ENCODE measurements at regions of chr2 and their contacts with region 1.

Region 1: DNA sequence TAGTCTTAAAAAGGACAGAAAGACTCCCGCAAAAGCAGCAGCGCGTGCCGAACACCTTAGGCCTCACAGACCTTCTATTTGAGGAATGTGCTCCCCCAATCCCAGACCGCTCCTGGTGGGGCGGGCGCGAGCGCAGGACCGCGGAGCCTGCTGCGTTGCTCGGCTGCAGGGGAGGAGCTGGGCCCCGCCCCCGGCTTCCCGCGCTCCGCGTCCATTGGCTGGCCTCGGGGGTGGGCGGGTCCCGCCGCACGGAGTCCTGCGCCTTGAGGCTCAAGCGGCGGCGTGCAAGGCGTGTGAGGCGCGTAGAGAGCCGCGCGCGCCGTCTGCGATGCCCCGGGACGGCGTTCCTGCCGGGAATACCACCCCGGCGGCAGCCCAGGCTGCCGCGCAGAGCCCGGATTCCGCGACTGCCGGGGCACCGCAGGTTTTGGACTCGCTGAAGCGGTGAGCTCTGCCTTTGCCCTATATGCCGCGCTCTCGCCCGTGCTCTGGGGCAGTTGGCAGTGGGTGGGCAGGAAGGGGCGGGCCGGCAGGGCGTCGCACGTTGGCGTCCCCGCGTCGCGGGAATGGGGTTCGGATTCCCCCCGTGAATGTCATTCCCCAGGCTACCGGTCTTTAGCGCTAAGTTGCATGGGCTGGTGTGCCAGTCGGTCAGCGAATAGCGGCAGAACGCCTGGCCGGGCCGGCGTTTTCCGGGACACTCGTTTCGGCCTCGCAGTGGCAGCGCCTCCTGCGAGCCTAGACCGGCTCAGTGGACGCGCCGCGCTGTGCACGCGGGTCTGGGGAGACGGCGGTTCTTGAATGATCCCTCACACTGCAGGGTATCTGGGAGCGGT is 49.6 kb upstream of the PAIP2B start:
- DNase-seq: peak; percentile 98
- H3K4me3 Mint-ChIP-seq: peak overlapping the region; percentile 86
- H3K27ac Mint-ChIP-seq: peak overlapping the region; percentile 41
- H3K4me1 Mint-ChIP-seq: peaks cover 20% of the 10 kb centered on the region
- H3K27me3 Mint-ChIP-seq: peaks cover 42% of the 10 kb centered on the region
- CTCF ChIP-seq: no peak

Region 2: GRCh38 chr2:71157124-71157793 is 119.3 kb before region 1 on chr2:
- CTCF ChIA-PET with region 1: no interaction called
- intact Hi-C with region 1: loop called (anchors 10 kb)
- DNase-seq: peak; percentile 70
- H3K4me3 Mint-ChIP-seq: peak overlapping the region; percentile 5
- H3K27ac Mint-ChIP-seq: no peak overlapping the region
- H3K4me1 Mint-ChIP-seq: peaks cover 16% of the 10 kb centered on the region
- H3K27me3 Mint-ChIP-seq: peaks cover 52% of the 10 kb centered on the region
- CTCF ChIP-seq: peak; percentile 80

Region 3: DNA sequence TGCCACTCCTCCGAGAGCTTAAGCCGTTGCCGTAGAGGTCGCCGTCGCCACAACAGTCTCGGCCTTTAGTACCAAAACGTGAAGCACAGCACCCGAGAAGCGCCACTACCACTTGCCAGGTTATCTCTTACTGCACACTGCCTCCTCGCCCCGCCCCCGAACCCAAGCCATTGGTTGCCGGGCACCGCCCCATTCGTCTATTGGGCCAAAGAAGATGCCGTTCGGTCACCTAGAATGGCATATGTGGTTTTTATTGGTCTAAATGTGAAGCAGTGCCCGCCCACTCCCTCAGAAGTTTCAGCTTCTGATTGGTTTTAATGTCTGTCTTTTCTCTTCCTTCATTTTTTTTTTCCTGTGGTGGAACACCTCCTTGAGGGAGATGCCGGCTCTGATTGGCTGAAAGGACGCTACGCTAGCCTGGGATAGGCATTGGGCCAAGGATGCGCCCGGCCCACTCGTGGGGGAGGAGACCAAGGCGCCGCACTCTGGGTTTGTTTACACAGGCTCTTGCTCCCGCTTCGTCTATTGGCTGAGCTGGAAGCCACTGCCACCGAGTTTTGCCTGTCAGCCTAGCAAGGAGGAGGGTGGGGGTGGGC is 49.5 kb before region 1 on chr2 and contains the start of gene PAIP2B:
- CTCF ChIA-PET with region 1: interaction called, 6 read pairs
- intact Hi-C with region 1: loop called (anchors 2 kb)
- DNase-seq: peak; percentile 98
- H3K4me3 Mint-ChIP-seq: peak within 1 kb of the TSS; percentile 94
- H3K27ac Mint-ChIP-seq: peak within 1 kb of the TSS; percentile 91
- H3K4me1 Mint-ChIP-seq: peaks cover 9% of the 10 kb centered on the region
- H3K27me3 Mint-ChIP-seq: peaks cover 39% of the 10 kb centered on the region
- CTCF ChIP-seq: no peak
- total RNA-seq, gene PAIP2B: 3.6 and 4.0 TPM in 2 replicates

Region 4: GRCh38 chr2:71466303-71467173 is 190.0 kb after region 1 on chr2:
- CTCF ChIA-PET with region 1: no interaction called
- intact Hi-C with region 1: no loop called
- DNase-seq: peak; percentile 54
- H3K4me3 Mint-ChIP-seq: no peak overlapping the region
- H3K27ac Mint-ChIP-seq: no peak overlapping the region
- H3K4me1 Mint-ChIP-seq: peaks cover 8% of the 10 kb centered on the region
- H3K27me3 Mint-ChIP-seq: peaks cover 25% of the 10 kb centered on the region
- CTCF ChIP-seq: no peak

Region 5: DNA sequence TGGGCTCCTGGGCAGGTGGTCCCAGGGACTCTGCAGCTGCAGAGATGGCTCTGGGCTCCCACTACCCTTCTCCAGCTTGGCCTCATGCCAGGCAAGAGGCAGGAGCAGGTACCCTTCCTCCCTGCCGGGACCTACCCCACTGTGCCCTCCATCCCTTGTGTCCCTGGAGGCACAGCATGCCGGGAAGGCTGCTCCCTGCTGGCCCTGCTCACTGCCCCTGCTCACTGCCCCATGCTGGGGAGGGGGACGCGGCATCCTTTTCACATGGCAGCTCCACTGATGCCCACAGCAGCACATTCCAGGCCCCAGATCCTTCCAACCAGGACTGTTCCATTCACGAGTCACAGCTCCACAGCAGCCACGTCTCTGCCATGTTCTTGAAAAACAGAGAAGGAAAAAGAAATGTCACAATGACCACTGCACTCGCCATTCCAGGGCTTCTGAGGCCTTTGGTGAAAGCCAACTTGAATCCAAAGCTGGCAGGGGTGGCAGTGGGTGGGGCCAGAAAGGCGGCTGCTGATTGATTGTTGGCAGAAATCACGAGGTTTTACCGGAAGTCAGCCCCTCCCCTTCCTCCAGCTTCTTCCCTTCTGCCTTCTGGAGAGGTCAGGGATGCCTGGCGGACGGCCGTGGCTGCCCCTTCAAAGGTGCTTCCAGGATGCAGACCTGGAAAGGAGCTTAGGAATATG is 603.1 kb after region 1 on chr2:
- CTCF ChIA-PET with region 1: no interaction called
- intact Hi-C with region 1: no loop called
- DNase-seq: no peak
- H3K4me3 Mint-ChIP-seq: no peak overlapping the region
- H3K27ac Mint-ChIP-seq: no peak overlapping the region
- H3K4me1 Mint-ChIP-seq: peaks cover 17% of the 10 kb centered on the region
- H3K27me3 Mint-ChIP-seq: peaks cover 52% of the 10 kb centered on the region
- CTCF ChIP-seq: no peak

Measured in Calu3 (cell line).